ENCODE measurements at regions of chr19 and their contacts with region 1.

Region 1: DNA sequence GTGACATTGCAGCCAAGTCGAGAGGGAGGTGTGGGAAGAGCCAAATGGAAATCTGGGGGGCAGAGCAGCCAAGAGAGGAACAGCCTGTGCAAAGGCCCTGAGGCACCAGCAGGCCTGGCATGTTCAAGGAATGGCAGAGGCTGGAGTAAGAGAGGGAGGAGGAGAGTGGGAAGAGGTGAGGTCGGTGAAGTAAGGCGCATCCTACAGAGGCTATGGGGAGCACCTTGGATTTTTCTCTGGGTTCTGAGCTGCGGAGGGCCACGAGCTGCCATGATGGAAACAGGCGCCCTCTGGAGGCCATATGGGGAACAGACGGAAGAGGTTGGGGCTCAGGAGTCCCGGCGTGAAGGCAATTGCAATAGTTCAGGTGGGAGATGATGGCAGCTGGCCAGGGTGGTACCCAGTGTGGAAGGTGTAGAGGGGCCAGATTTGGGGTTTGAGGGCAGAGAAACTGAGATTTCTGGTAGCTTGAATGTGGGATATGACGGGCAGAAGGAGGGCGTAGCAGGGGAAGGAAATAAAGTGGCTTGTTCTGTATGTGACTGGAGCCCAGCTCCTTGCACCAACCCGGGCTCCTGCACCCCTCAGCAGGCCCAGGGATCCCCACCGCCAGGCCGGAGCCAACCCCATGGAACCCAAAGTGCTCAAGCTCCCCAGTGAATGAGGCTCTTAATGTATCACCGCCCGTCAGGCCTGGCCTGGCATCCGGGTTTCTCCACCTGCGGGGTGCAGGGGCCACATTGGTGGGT is 20.5 kb upstream of the STRN4 start:
- DNase-seq: peak; percentile 68
- H3K4me3 Mint-ChIP-seq: no peak overlapping the region
- H3K27ac Mint-ChIP-seq: no peak overlapping the region
- H3K4me1 Mint-ChIP-seq: peaks cover 2% of the 10 kb centered on the region
- H3K27me3 Mint-ChIP-seq: no peaks in the 10 kb centered on the region

Region 2: DNA sequence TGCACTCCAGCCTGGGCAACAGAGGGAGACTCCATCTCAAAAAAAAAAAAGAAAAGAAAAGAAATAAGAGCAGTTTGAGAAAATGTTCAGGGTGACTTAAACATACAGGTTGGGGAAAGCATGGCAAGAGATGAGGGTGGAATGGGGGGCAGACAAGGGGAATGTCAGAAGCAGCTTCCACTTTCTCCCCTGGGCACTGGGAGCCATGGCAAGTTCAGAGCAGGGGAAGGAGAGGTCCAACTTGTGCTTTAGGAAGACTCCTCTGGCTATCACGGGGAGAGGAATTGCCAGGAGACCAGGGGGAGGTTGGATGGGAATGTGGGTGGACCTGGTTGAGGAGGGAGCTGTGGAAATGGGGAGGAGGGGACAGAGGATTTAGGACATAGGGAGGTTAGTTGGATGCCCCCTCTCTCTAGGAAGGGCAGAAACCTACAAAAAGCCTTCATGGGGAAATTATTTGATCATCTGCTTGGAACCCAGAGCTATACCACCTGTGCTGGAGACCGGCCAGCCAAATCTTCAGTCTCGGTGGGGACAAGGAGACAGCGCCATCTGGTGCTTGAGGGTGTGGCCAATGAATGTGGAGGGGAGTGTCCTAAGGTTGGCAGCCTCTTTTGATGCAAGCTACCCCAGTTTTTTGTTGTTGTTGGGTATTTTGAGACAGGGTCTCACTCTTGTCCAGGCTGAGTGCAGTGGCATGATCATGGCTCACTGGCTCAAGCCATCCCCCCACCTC is 13.2 kb before region 1 on chr19:
- CTCF ChIA-PET with region 1: interaction called, 13 read pairs
- POLR2A ChIA-PET with region 1: no interaction called
- DNase-seq: peak; percentile 83
- H3K4me3 Mint-ChIP-seq: no peak overlapping the region
- H3K27ac Mint-ChIP-seq: no peak overlapping the region
- H3K4me1 Mint-ChIP-seq: peaks cover 18% of the 10 kb centered on the region
- H3K27me3 Mint-ChIP-seq: no peaks in the 10 kb centered on the region

Region 3: GRCh38 chr19:46850228-46851203 is 83.8 kb after region 1 on chr19 and contains the start of gene AP2S1:
- CTCF ChIA-PET with region 1: no interaction called
- POLR2A ChIA-PET with region 1: interaction called, 12 read pairs
- DNase-seq: peak; percentile 93
- H3K4me3 Mint-ChIP-seq: peak within 1 kb of the TSS; percentile 89
- H3K27ac Mint-ChIP-seq: peak within 1 kb of the TSS; percentile 87
- H3K4me1 Mint-ChIP-seq: peaks cover 29% of the 10 kb centered on the region
- H3K27me3 Mint-ChIP-seq: peaks cover 4% of the 10 kb centered on the region
- total RNA-seq, gene AP2S1: 130 to 136 TPM